Psoas muscle (tissue), 8 donors: ENCODE measurements at regions of chr18 and their contacts with region 1.

Region 1: DNA sequence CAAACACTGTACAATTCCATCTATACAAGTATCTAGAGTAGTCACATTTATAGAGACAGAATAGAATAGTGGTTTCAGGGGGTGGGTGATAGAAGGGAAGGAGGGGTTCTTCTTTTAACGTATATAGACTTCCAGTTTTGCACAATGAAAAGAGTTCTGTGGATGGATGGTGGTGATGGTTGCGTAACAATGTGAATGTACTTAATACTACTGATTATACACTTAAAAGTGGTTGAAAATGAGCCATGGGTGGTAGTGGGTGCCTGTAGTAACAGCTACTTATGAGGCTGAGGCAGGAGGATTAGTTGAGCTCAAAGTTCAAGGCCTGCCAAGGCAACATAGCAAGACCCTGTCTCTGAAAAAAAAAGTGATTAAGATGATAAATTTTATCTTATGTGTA is 85.8 kb downstream of the SETBP1 start:
- DNase-seq: no peak
- ATAC-seq: no peak
- H3K4me3 ChIP-seq: no peak overlapping the region
- H3K27ac ChIP-seq: peak overlapping the region; percentile 78
- H3K4me1 ChIP-seq: peaks cover 66% of the 10 kb centered on the region
- H3K27me3 ChIP-seq: no peaks in the 10 kb centered on the region
- CTCF ChIP-seq: no peak

Region 2: GRCh38 chr18:44786688-44787087 is 20.2 kb after region 1 on chr18:
- intact Hi-C with region 1: loop called in 1 of 2 experiments (anchors 2 kb)
- DNase-seq: no peak
- ATAC-seq: no peak
- H3K4me3 ChIP-seq: peak overlapping the region; percentile 48
- H3K27ac ChIP-seq: peak overlapping the region; percentile 65
- H3K4me1 ChIP-seq: peaks cover 61% of the 10 kb centered on the region
- H3K27me3 ChIP-seq: no peaks in the 10 kb centered on the region
- CTCF ChIP-seq: no peak

Region 3: GRCh38 chr18:44826418-44827259 is 60.2 kb after region 1 on chr18:
- intact Hi-C with region 1: loop called in 1 of 2 experiments (anchors 2 kb)
- DNase-seq: peak; percentile 41 to 63
- ATAC-seq: peak; percentile 66 to 84 (median 73)
- H3K4me3 ChIP-seq: peak overlapping the region; percentile 16
- H3K27ac ChIP-seq: peak overlapping the region; percentile 74
- H3K4me1 ChIP-seq: peaks cover 46% of the 10 kb centered on the region
- H3K27me3 ChIP-seq: no peaks in the 10 kb centered on the region
- CTCF ChIP-seq: no peak